ENCODE measurements at regions of chr2 and their contacts with region 1.

Region 1: GRCh38 chr2:232647261-232647660 is 13.9 kb downstream of the EFHD1 start:
- DNase-seq: no peak
- H3K4me3 ChIP-seq: no peak overlapping the region
- H3K27me3 ChIP-seq: no peaks in the 10 kb centered on the region
- CTCF ChIP-seq: no peak

Region 2: DNA sequence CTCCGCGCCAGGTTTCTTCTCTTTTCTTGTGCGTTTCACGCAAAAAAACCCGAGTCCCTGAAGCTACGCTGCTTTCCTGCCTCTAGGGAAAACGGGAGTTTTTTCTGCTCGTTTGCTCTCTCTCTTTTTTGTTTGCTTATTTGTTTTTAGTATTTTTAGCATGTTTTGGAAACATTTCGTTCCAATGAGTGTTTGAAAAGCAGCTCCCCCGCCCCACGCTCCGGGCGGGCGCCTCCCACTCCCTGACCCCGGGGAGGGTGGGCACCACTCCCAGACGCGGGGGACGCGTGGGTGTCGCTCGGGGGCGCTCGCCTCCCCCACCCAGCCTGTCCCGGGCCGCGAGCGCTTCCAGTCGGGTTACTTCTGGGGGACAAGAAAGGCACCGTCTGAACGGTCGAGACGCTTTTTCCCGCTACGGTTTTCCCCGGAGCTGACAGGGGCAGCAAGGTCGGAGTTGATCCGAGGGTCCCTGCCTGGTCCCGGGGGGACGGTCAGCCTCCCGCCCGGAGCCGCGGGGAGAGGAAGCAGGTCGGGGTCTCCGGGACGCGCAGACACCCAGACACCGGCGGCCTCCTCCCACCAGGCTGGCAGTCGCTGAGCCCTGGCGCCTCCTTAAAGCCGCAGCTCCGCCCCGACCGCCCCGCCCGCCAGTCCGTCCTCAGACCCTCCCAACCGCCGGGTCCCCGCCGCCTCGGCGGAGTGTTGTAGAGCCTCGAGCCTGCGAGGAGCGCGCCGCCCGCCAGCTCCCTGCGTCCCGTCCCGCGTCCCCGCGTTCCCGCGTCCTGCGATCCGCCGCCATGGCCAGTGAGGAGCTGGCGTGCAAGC is 14.1 kb before region 1 on chr2 and contains the start of gene EFHD1:
- CTCF ChIA-PET with region 1: interaction called, 4 read pairs
- POLR2A ChIA-PET with region 1: interaction called, 14 read pairs
- DNase-seq: peak; percentile 35
- H3K4me3 ChIP-seq: peak within 1 kb of the TSS; percentile 55
- H3K27me3 ChIP-seq: peaks cover 2% of the 10 kb centered on the region; the same call in 1 of the 2 replicates
- CTCF ChIP-seq: no peak
- polyA plus RNA-seq, gene EFHD1: 60.0 and 76.5 TPM in 2 replicates

Region 3: GRCh38 chr2:232658196-232658785 is 11.0 kb after region 1 on chr2:
- CTCF ChIA-PET with region 1: no interaction called
- POLR2A ChIA-PET with region 1: interaction called, 10 read pairs
- DNase-seq: no peak
- H3K4me3 ChIP-seq: no peak overlapping the region
- H3K27me3 ChIP-seq: no peaks in the 10 kb centered on the region
- CTCF ChIP-seq: peak; percentile 10; the same call in 1 of the 2 replicates

Region 4: GRCh38 chr2:233234264-233234663 is 587.0 kb after region 1 on chr2:
- CTCF ChIA-PET with region 1: no interaction called
- POLR2A ChIA-PET with region 1: interaction called, 16 read pairs
- DNase-seq: no peak
- H3K4me3 ChIP-seq: no peak overlapping the region
- H3K27me3 ChIP-seq: peaks cover 3% of the 10 kb centered on the region
- CTCF ChIP-seq: no peak

Measured in BJ (cell line).